A673 (cell line): ENCODE measurements at regions of chr12 and their contacts with region 1.

Region 1: DNA sequence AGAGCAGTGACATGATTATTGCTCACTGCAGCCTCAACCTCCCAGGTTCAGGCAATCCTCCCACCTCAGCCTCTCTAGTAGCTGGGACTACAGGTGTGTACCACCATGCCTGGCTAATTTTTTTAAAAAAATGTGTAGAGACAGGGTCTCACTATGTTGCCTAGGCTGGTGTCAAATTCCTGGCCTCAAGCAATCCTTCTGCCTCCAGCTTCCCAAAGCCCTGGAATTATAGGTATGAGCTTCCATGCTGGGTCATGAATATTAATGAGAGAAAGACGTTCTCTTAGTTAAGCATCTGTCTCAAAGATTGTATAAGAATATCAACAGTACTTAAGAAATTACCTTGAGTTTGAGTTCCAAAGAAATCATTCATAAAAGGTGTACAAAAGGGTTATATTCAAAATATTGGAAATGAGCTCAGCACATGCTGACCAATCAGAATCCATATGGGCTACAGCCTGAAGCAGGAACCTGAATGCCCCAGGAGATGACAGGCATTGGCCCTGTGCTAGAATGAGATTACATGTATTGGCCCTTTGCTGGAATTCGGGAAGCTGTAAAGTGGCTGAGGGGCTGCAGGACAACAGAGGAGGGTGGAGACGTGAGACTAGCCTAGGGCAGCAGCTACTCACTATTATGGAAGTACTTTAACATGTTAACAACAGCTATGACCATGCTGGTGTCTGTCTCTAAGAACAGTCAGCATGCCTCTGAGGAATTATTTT is 157.0 kb upstream of the CPNE8 start:
- DNase-seq: no peak
- H3K4me3 ChIP-seq: no peak overlapping the region
- H3K27ac ChIP-seq: no peak overlapping the region
- H3K4me1 ChIP-seq: peaks cover 4% of the 10 kb centered on the region
- H3K27me3 ChIP-seq: no peaks in the 10 kb centered on the region
- CTCF ChIP-seq: no peak

Region 2: GRCh38 chr12:39287817-39288216 is 225.4 kb after region 1 on chr12:
- CTCF ChIA-PET with region 1: no interaction called
- POLR2A ChIA-PET with region 1: no interaction called
- intact Hi-C with region 1: loop called (anchors 10 kb)
- DNase-seq: no peak
- H3K4me3 ChIP-seq: no peak overlapping the region
- H3K27ac ChIP-seq: no peak overlapping the region
- H3K4me1 ChIP-seq: no peaks in the 10 kb centered on the region
- H3K27me3 ChIP-seq: no peaks in the 10 kb centered on the region
- CTCF ChIP-seq: no peak